ENCODE measurements at regions of chr6 and their contacts with region 1.

Region 1: DNA sequence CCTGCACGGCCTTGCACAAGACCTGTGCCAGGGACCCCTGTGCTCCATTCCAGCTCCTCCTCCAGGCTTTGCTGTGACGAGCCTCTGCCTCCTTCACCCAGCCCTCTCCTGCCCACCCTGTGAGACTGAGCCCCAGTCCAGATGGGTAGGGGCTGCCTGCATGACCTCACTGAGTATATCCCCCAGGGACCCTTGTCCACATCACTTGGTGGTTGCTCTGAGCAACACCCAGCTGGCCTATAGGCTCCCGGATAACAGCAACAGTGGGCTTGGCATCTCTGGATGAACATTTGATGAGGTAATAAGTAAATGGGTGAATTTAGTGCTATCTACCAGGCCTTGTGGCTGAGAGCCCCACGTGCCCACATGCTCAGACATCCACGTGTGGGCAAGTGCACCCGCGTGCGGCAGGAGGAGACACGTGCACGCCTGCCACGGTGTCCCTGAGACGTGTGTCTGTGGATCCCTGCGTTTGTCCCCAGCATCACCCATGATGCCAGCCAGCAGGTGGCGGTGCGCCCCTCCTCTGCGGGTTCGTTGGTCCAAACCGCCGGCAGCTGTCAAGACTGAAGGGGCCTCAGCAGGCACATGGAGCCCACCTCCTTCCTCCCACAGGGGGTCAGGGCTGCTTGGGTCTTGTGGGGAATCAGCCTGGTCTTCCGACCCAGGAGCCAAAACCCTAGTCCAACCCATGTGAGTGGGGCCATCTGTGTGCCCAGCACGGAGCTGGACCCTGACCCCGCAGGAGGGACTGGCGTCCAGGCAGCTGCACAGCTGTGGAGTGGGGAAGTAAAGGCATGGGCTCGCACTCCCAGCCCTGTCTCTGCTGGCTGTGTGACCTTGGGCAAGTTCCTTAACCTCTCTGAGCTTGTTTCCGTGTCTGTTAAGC is 45.9 kb downstream of the FGD2 start:
- DNase-seq: peak; percentile 96
- H3K4me3 Mint-ChIP-seq: peak overlapping the region; percentile 86
- H3K27ac Mint-ChIP-seq: peak overlapping the region; percentile 99
- H3K4me1 Mint-ChIP-seq: peaks cover 56% of the 10 kb centered on the region
- H3K27me3 Mint-ChIP-seq: no peaks in the 10 kb centered on the region

Region 2: GRCh38 chr6:37029249-37029971 is 22.0 kb before region 1 on chr6:
- CTCF ChIA-PET with region 1: interaction called, 161 read pairs
- intact Hi-C with region 1: loop called (anchors 1 kb)
- DNase-seq: peak; percentile 67
- H3K4me3 Mint-ChIP-seq: no peak overlapping the region
- H3K27ac Mint-ChIP-seq: peak overlapping the region; percentile 26
- H3K4me1 Mint-ChIP-seq: peaks cover 46% of the 10 kb centered on the region
- H3K27me3 Mint-ChIP-seq: no peaks in the 10 kb centered on the region

Region 3: GRCh38 chr6:37089783-37090182 is 38.4 kb after region 1 on chr6:
- CTCF ChIA-PET with region 1: no interaction called
- intact Hi-C with region 1: no loop called
- DNase-seq: no peak
- H3K4me3 Mint-ChIP-seq: no peak overlapping the region
- H3K27ac Mint-ChIP-seq: no peak overlapping the region
- H3K4me1 Mint-ChIP-seq: peaks cover 8% of the 10 kb centered on the region
- H3K27me3 Mint-ChIP-seq: no peaks in the 10 kb centered on the region

Region 4: DNA sequence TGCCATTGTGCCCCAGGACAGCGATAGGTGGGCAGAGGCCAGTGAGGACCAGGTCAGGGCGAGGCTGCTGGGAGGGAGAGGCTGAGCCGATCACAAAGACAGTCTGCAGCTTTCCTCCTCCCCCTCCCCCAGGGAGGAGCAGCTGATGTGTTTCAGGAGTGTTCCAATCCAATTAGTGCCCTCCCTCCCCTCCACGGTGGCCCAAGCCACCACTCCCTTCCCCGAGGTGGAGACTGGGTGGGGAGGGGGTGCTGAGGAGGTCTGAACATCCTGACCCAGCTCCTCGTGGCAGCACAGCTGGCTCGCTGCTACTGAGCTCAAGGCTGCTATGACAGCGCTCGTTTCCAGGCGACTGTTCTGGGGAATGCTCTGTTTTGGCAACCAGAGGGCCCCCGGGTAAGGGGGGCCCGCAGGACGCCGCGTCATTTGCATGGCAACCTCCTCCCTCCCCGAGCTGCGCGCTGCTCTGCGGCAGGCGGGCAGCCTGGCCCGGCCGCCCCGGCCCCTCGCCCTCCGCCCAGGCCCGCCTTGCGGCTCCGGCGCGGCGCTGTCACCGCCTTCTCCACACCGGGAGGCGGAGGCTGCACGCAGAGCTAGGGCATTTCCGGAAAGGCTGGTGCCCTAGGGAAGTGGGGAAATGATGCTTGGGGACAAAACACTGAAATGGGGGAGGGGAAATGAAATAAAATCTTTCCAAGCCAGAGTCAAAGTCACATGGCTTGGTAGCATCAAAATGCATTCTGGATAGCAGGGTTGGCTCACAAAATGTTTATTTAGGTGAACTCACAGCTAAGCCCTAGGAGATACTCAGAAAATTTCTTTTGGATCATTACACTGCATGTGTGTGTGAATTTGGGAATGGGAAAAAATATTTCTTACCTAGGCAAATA is 51.1 kb after region 1 on chr6:
- CTCF ChIA-PET with region 1: interaction called, 14 read pairs
- intact Hi-C with region 1: loop called (anchors 1 kb)
- DNase-seq: peak; percentile 83
- H3K4me3 Mint-ChIP-seq: peak overlapping the region; percentile 58
- H3K27ac Mint-ChIP-seq: peak overlapping the region; percentile 65
- H3K4me1 Mint-ChIP-seq: peaks cover 23% of the 10 kb centered on the region
- H3K27me3 Mint-ChIP-seq: no peaks in the 10 kb centered on the region

Region 5: GRCh38 chr6:37155394-37156312 is 104.3 kb after region 1 on chr6:
- CTCF ChIA-PET with region 1: no interaction called
- intact Hi-C with region 1: loop called (anchors 1 kb)
- DNase-seq: peak; percentile 87
- H3K4me3 Mint-ChIP-seq: peak overlapping the region; percentile 39
- H3K27ac Mint-ChIP-seq: peak overlapping the region; percentile 90
- H3K4me1 Mint-ChIP-seq: peaks cover 32% of the 10 kb centered on the region
- H3K27me3 Mint-ChIP-seq: no peaks in the 10 kb centered on the region

Region 6: GRCh38 chr6:37257634-37258404 is 206.4 kb after region 1 on chr6 and contains the starts of genes TBC1D22B and TMEM217:
- CTCF ChIA-PET with region 1: interaction called, 3 read pairs
- intact Hi-C with region 1: loop called (anchors 5 kb)
- DNase-seq: peak; percentile 99
- H3K4me3 Mint-ChIP-seq: peak within 1 kb of the TSS; percentile 80
- H3K27ac Mint-ChIP-seq: peak within 1 kb of the TSS; percentile 87
- H3K4me1 Mint-ChIP-seq: peaks cover 46% of the 10 kb centered on the region
- H3K27me3 Mint-ChIP-seq: no peaks in the 10 kb centered on the region
- total RNA-seq, gene TBC1D22B: 13.4 to 15.1 TPM
- total RNA-seq, gene TMEM217: 0.81 to 0.95 TPM